ENCODE measurements at regions of chr19 and their contacts with region 1.

Region 1: GRCh38 chr19:12639901-12640613 is 26.5 kb downstream of the MAN2B1 start:
- DNase-seq: peak; percentile 91
- CTCF ChIP-seq: peak; percentile 65

Region 2: DNA sequence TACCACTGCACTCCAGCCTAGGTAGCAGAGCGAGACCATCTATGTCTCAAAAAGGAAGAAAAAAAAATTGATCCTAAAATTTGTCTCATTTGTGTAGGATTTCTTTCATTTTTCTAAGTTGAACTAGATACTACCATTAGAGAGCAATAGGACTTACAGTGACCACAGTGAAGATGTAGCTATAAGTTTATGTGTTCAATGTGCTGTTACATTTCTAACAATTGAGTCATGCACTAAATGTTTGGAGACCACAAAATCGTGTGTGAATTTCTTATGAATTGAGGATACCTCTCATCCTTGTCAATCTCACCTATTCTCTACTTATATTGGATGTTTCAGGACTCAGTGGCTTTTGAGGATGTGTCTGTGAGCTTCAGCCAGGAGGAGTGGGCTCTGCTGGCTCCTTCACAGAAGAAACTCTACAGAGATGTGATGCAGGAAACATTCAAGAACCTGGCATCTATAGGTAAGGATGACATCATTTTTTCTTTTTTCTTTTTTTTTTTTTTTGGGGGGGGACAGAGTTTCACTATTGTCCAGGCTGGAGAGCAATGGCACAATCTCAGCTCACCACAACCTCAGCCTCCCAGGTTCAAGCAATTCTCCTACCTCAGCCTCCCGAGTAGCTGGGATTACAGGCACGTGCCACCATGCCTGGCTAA is 16.6 kb before region 1 on chr19:
- CTCF ChIA-PET with region 1: interaction called, 11 read pairs
- POLR2A ChIA-PET with region 1: no interaction called
- DNase-seq: no peak
- CTCF ChIP-seq: no peak

Region 3: DNA sequence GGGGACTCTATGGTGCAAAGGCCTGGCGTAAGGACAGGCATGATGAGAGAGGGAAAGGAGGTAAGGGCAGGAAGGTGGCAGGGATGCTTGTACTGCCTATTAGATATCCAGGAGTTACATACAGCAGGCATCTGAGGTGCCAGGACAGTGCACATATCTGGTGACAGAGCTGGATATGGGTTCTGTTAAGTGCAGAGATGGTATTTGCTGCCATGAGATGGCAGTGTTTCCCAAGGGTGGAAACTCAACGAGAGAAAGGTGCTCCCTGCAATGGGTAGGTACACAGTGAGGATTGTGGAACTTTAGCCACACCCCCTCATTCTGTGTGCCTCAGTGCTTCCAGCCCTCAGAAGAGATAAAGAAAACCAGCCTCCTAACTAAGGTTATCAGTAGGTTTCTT is 76.8 kb after region 1 on chr19:
- CTCF ChIA-PET with region 1: no interaction called
- POLR2A ChIA-PET with region 1: no interaction called
- DNase-seq: no peak
- CTCF ChIP-seq: peak; percentile 38